HCT116 (cell line): ENCODE measurements at regions of chr15 and their contacts with region 1.

Region 1: DNA sequence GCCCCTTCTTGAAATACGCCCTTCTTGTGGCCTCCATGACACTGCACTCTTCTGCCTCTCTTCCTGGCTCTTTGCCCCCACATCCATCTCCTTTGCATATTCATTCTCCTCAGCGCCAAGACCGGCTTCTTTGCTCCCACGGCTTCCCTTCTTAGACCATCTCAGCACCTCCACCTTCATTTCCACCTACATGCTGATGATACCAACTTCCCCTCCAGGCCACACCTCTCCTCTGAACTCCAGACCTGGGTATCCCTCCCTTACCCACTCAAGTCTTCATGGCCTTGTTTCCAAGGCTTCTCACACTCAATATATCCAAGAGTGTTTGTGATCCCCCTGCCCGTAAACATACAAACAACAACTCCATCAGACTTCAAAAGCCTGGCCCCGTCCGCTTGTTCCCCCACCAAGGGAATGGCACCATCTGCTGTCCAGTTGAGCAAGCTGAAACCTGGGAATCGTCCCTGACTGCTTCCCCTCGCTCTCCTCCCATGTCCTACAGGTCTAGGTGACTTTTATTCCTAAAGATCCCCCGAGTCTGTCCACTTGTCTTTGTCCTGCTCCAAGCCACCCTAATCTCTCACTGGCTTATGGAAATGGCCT is 27.8 kb upstream of the FAM174B start:
- DNase-seq: no peak
- ATAC-seq: peak; percentile 67
- H3K4me3 ChIP-seq: no peak overlapping the region
- H3K27ac ChIP-seq: no peak overlapping the region
- H3K4me1 ChIP-seq: no peaks in the 10 kb centered on the region
- H3K27me3 ChIP-seq: no peaks in the 10 kb centered on the region
- CTCF ChIP-seq: peak; percentile 22 to 44 (median 30); a peak in 4 of 6 replicates
- POLR2A ChIP-seq: no peak
- RAD21 ChIP-seq: peak; percentile 55

Region 2: GRCh38 chr15:92521624-92522008 is 161.7 kb before region 1 on chr15:
- CTCF ChIA-PET with region 1: interaction called, 4 read pairs
- POLR2A ChIA-PET with region 1: no interaction called
- RAD21 ChIA-PET with region 1: no interaction called
- intact Hi-C with region 1: loop called (anchors 10 kb)
- DNase-seq: peak; percentile 46
- ATAC-seq: peak; percentile 99
- H3K4me3 ChIP-seq: no peak overlapping the region
- H3K27ac ChIP-seq: no peak overlapping the region
- H3K4me1 ChIP-seq: no peaks in the 10 kb centered on the region
- H3K27me3 ChIP-seq: no peaks in the 10 kb centered on the region
- CTCF ChIP-seq: peak; percentile 53 to 70 (median 67); a peak in 5 of 6 replicates
- POLR2A ChIP-seq: no peak
- RAD21 ChIP-seq: peak; percentile 79